ENCODE measurements at regions of chr14 and their contacts with region 1.

Region 1: DNA sequence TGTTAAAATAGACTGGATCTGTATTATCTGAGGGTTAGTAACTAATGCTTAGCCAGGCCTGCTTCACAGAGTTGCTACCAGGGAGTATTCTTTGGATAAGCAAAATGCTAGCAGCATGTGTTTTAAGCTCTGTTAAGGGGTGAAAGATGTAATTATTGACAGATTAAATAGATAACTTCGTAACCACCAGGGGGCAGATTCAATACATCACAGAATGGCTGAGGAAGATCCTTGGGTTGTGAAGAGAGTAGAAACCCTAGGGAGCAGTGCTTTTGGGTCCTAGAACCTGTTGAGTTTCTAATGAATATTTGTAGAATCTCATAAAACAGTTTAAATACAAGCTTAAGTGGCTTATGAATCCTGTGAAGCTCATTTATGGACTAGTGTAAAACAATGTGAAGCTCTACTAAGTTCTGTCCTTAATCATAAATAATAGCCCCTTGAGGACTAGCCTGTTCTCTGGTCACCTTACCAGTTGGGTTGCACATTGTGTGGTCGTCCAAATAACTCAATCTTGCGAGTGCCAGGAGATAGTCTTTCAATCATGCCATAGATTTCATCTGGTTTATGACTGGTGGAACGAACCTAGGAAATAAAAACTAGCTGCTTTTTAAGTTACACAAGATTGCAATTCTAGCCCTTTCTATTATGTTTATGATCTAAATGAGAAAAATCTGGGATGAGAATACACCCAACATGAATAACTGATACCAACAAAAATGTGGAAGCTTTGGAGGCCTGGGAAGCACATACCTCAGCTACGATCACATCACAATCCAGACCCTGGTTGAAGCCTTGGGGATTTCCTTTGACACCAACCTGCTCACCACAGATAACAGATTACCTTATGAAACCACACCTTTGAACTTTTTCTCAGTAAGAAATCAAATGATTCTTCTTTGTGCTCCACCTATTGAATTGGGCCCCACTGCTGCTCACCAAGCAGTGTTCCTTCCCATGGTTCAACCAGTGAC is 12.3 kb downstream of the METTL3 start:
- DNase-seq: peak; percentile 53
- ATAC-seq: peak; percentile 59
- H3K4me3 Mint-ChIP-seq: no peak overlapping the region
- H3K27ac Mint-ChIP-seq: peak overlapping the region; percentile 40
- H3K4me1 Mint-ChIP-seq: peaks cover 21% of the 10 kb centered on the region
- H3K27me3 Mint-ChIP-seq: no peaks in the 10 kb centered on the region

Region 2: GRCh38 chr14:21367582-21368144 is 131.2 kb before region 1 on chr14:
- CTCF ChIA-PET with region 1: no interaction called
- POLR2A ChIA-PET with region 1: no interaction called
- DNase-seq: no peak
- ATAC-seq: no peak
- H3K4me3 Mint-ChIP-seq: no peak overlapping the region
- H3K27ac Mint-ChIP-seq: no peak overlapping the region
- H3K4me1 Mint-ChIP-seq: no peaks in the 10 kb centered on the region
- H3K27me3 Mint-ChIP-seq: no peaks in the 10 kb centered on the region

Region 3: DNA sequence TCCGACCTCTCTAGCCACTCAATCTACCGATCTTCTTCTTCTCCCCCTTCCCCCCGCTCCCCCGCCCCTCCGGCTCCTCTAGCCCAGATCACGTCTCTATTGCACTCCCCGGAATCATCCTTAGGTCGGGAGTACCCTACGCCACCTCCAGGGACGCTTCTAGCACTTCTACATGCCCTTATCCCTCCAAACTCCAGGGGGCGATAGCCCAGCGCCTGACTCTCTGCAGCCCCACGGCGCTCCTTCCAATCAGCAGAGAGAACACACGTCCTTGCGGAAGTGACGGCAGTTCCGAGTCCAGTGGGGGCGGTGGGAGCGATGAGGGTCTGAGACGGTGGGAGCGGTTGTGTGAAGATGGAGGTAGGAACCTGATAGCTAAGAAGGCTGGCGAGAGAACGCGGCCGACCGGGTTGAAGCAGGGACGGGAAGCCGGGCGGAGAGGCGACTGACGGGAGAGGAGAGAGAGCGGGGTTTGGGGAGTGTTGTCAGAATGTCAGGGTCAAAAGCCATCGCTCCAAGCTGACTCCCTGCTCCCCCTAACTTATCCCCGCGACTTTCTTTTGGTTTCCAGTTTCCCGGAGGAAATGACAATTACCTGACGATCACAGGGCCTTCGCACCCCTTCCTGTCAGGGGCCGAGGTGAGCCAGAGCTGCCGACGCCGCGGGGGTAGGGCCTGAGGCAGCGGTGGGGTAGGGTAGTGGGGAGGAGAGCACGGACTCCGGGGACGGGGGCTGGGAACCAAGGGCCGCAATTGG is 21.7 kb before region 1 on chr14 and contains the starts of genes RAB2B and TOX4:
- CTCF ChIA-PET with region 1: interaction called, 57 read pairs
- POLR2A ChIA-PET with region 1: interaction called, 4 read pairs
- DNase-seq: peak; percentile 97
- ATAC-seq: peak; percentile 99
- H3K4me3 Mint-ChIP-seq: peak within 1 kb of the TSS; percentile 98
- H3K27ac Mint-ChIP-seq: peak within 1 kb of the TSS; percentile 99
- H3K4me1 Mint-ChIP-seq: peaks cover 31% of the 10 kb centered on the region
- H3K27me3 Mint-ChIP-seq: no peaks in the 10 kb centered on the region
- total RNA-seq, gene RAB2B: 20.7 to 22.1 TPM
- total RNA-seq, gene TOX4: 66.2 to 71.1 TPM

Region 4: DNA sequence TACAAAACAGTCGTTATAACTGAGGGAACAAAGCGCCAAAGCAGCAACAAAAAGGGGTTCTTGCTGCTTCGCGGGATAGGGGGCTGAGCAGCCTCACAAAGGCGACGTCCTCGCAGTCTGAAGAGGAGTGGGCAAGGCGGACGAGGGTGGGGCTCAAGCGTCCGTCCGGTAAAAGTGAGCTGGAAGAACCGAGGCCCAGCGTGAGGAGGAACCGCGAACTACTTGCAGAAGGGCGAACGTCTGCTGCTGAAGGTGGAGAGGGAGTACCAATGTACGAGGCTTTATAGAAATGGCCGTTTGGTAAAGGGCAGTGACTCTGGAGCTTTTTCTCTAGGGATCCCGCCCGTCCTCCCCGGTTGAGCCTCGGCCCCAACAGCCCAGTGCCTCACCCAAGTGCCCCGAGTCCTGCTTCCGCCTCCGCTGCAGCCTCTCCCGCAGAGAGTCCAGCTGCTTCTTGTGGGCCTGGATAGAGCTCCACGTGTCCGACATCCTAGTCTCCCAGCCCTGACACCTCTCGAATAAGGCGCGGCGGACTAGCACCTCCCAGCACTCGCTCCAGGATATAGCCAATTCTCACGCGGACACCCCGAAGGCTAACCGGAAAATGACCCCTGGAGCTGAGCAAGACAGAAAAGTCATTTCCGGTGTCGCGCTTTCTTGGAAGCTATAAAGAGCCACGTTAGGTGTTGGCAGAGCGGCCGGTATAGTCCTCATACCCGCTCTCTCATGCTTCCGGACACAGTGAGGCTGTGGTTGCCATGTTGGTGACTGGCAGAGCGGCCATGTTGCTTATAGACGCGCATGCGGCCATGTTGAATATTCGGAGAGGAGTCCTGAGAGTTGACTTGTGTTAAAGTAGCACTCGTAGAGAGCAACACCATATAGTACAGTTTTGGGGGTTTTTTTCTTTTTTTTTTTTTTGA is 12.2 kb after region 1 on chr14 and contains the start of gene METTL3:
- CTCF ChIA-PET with region 1: interaction called, 104 read pairs
- POLR2A ChIA-PET with region 1: interaction called, 9 read pairs
- DNase-seq: peak; percentile 97
- ATAC-seq: peak; percentile 99
- H3K4me3 Mint-ChIP-seq: peak within 1 kb of the TSS; percentile 96
- H3K27ac Mint-ChIP-seq: peak within 1 kb of the TSS; percentile 99
- H3K4me1 Mint-ChIP-seq: peaks cover 32% of the 10 kb centered on the region
- H3K27me3 Mint-ChIP-seq: peaks cover 6% of the 10 kb centered on the region
- total RNA-seq, gene METTL3: 68.3 to 70.8 TPM

Region 5: DNA sequence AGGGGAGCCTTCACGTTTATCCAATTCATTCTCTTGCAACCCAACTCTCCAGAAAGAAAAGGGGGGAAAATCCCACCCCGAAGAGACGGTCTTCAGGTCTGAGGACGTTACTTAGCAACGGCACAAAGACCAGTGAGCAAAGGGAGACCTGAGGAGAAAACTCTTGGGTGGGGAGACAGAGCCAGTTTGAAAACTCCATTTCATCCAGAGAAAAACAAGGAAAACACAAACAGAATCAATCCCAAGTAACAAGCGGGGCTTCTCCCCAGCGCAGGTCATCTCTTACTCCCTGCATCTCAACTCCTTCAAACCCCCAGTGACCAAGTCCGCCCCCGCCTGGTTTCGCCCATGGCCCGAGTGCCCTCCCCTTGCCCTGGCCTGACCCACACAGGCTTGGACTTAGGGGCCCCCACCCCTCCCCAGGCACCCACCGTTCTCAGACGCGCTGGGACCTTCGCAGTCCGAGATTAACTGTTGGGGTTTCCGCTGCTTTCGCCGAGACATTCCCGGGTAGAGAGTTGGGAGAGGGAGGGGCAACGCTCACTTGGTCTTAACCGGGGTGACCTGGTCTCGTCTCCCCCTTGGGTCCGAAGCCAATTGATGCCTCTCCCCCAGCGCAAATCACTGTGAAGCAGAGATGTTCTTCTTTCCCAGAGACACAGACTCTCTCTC is 37.7 kb after region 1 on chr14:
- CTCF ChIA-PET with region 1: interaction called, 13 read pairs
- POLR2A ChIA-PET with region 1: no interaction called
- DNase-seq: no peak
- ATAC-seq: no peak
- H3K4me3 Mint-ChIP-seq: no peak overlapping the region
- H3K27ac Mint-ChIP-seq: no peak overlapping the region
- H3K4me1 Mint-ChIP-seq: peaks cover 5% of the 10 kb centered on the region
- H3K27me3 Mint-ChIP-seq: peaks cover 56% of the 10 kb centered on the region